Activated naive CD4-positive, alpha-beta T cell treated with anti-CD3 and anti-CD28 coated beads for 36 hours (primary cell): ENCODE measurements at regions of chr6 and their contacts with region 1.

Region 1: GRCh38 chr6:152160346-152160745 is 352.9 kb downstream of the ESR1 start:
- DNase-seq: peak; percentile 64
- H3K4me3 Mint-ChIP-seq: no peak overlapping the region
- H3K27ac Mint-ChIP-seq: peak overlapping the region; percentile 85
- H3K4me1 Mint-ChIP-seq: peaks cover 28% of the 10 kb centered on the region
- H3K27me3 Mint-ChIP-seq: no peaks in the 10 kb centered on the region

Region 2: DNA sequence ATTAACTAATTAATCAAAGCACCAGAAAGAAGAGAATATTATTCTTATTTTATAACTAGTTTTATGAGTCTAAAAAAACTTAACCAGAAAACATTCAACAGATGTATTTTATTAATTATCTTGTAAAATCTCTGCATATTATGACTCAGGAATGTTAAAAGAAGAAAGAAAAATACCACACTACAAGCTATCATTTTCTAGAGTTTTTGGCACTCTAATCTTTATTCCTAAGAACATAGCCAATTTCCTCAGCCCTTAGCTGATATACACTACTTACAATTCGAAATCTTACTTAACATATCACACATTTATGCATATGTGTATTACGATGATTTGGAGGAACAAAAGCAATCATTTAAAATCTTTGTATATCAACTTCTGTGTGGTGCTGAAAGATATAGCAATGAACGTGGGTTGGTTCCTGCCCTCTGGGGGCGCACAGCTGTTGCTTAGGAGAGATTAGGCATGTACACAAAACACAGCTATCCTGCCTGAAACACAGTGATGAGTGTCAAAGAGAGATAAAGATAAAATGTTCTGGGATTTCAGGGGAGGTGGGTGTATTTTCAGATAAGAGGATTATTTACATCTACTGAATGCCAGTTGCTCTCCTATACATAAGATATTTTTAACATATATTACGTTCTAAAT is 72.3 kb after region 1 on chr6:
- CTCF ChIA-PET with region 1: no interaction called
- intact Hi-C with region 1: loop called (anchors 2 kb)
- DNase-seq: peak; percentile 54
- H3K4me3 Mint-ChIP-seq: peak overlapping the region; percentile 73
- H3K27ac Mint-ChIP-seq: no peak overlapping the region
- H3K4me1 Mint-ChIP-seq: peaks cover 26% of the 10 kb centered on the region
- H3K27me3 Mint-ChIP-seq: no peaks in the 10 kb centered on the region

Region 3: DNA sequence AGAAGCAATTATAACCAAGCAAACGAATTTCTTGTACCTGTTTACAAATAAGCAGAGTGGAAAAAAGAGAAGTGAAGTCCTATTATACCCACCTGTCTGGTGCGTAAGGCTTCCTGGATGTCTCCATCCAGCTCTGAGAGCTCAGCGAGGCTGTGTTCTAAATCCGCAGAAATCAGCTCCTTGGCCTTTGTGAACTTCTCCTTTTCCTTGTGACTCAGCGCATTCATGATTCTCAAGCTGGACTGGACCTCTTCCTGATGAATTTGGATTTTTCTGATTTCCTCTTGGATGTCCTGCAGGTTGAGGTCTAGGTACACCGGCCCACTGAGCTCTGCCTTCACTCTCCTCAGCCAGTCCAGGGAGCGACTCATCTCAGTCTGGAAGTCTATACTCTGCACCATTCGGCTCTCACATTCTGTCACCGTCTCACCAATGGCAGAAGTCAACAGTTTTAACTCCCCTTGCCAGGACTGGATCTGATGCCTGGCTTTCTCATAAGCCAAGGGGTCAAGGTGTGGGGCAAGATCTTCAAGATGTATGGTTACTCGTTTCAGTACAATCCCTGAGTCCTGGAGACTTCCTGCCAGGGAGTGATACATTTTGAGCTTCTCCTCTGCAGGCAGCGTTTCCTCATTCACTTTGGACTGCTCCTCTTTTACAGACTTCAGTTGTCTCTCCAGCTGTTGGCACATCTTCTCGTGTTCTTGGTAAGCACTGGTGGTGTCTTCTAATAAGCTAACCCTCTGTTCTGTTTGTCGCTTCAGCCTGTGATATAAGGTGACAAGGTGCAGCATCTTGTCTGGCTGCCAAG is 169.5 kb after region 1 on chr6:
- CTCF ChIA-PET with region 1: no interaction called
- intact Hi-C with region 1: no loop called
- DNase-seq: no peak
- H3K4me3 Mint-ChIP-seq: no peak overlapping the region
- H3K27ac Mint-ChIP-seq: no peak overlapping the region
- H3K4me1 Mint-ChIP-seq: no peaks in the 10 kb centered on the region
- H3K27me3 Mint-ChIP-seq: no peaks in the 10 kb centered on the region

Region 4: GRCh38 chr6:152701081-152701862 is 540.9 kb after region 1 on chr6:
- CTCF ChIA-PET with region 1: no interaction called
- intact Hi-C with region 1: no loop called
- DNase-seq: no peak
- H3K4me3 Mint-ChIP-seq: no peak overlapping the region
- H3K27ac Mint-ChIP-seq: no peak overlapping the region
- H3K4me1 Mint-ChIP-seq: no peaks in the 10 kb centered on the region
- H3K27me3 Mint-ChIP-seq: peaks cover 29% of the 10 kb centered on the region